ENCODE measurements at regions of chr2 and their contacts with region 1.

Region 1: DNA sequence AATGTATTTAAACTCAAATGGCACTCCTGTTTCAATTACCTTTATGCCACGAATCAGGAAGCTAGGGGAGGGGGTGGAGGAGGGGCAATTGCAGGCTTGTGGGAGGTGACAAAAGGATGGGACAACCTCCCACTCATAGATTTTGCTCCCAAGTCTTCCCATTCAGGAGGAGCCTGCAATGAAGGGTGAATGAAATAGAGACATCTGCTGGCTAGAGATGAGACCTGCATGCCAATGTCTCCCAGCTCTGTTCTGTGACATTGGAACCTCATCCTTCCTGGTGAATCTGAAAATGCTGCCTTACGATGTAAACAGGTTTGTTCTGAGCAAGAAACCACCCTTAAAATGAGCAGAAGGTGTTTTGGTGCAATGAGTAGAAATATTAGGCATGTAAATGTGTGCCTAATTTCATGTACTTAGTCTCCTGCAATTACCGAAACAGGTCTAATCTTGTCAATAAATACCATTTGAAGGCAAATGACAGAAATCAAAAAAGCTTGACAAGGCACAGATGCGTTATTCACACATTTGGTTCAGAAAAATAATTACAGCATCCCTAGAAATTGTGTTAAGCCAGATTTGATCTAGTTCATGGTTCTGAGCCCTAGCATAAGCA is 2.7 kb upstream of the PID1 start:
- DNase-seq: peak; percentile 65 to 73
- H3K4me3 ChIP-seq: peak overlapping the region in 1 of 4 experiments; percentile 44; a peak in 1 of 8 replicates
- H3K27ac ChIP-seq: no peak overlapping the region
- H3K4me1 ChIP-seq: peaks cover 3 to 9% (median 5%) of the 10 kb centered on the region in 4 experiments; a peak in 6 of 7 replicates
- H3K27me3 ChIP-seq: peaks cover 0 to 20% (median 17%) of the 10 kb centered on the region in 4 experiments; a peak in 6 of 7 replicates
- CTCF ChIP-seq: peak; percentile 14 to 94 (median 70)
- EP300 ChIP-seq: no peak
- POLR2A ChIP-seq: no peak
- RAD21 ChIP-seq: peak; percentile 85 to 87

Region 2: DNA sequence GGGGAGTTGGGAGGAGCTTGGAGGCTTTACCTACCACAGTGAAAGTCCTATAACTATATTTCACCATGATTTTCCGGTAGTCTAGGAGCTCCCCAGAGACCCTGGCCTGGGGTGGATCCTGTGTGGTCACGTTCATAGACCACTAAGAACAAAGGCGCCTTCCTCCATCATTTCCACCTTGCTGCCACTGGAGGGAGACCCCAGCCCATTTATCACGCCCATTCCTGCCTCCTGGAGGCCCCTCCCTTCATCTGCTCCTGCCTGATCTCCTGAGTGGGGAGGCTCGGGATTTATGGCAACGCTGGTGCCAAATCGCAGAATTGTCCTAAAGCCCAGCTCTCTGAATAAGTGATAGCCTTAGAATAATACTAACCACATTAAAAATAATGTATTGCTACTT is 584.8 kb before region 1 on chr2:
- CTCF ChIA-PET with region 1: interaction called, 32 read pairs
- POLR2A ChIA-PET with region 1: no interaction called
- DNase-seq: peak; percentile 38 to 68
- H3K4me3 ChIP-seq: no peak overlapping the region
- H3K27ac ChIP-seq: no peak overlapping the region
- H3K4me1 ChIP-seq: no peaks in the 10 kb centered on the region
- H3K27me3 ChIP-seq: no peaks in the 10 kb centered on the region
- CTCF ChIP-seq: peak; percentile 83 to 87 (median 85)
- EP300 ChIP-seq: no peak
- POLR2A ChIP-seq: no peak
- RAD21 ChIP-seq: peak; percentile 96 to 97

Region 3: GRCh38 chr2:228747483-228747882 is 526.3 kb before region 1 on chr2:
- CTCF ChIA-PET with region 1: interaction called, 13 read pairs
- POLR2A ChIA-PET with region 1: no interaction called
- DNase-seq: no peak
- H3K4me3 ChIP-seq: no peak overlapping the region
- H3K27ac ChIP-seq: no peak overlapping the region
- H3K4me1 ChIP-seq: no peaks in the 10 kb centered on the region
- H3K27me3 ChIP-seq: no peaks in the 10 kb centered on the region
- CTCF ChIP-seq: no peak
- EP300 ChIP-seq: no peak
- POLR2A ChIP-seq: no peak
- RAD21 ChIP-seq: no peak

Region 4: GRCh38 chr2:229126066-229126465 is 147.8 kb before region 1 on chr2:
- CTCF ChIA-PET with region 1: interaction called, 59 read pairs
- POLR2A ChIA-PET with region 1: no interaction called
- DNase-seq: no peak
- H3K4me3 ChIP-seq: no peak overlapping the region
- H3K27ac ChIP-seq: no peak overlapping the region
- H3K4me1 ChIP-seq: no peaks in the 10 kb centered on the region
- H3K27me3 ChIP-seq: no peaks in the 10 kb centered on the region
- CTCF ChIP-seq: no peak
- EP300 ChIP-seq: no peak
- POLR2A ChIP-seq: no peak
- RAD21 ChIP-seq: no peak

Region 5: GRCh38 chr2:229133155-229133772 is 140.6 kb before region 1 on chr2:
- CTCF ChIA-PET with region 1: interaction called, 59 read pairs
- POLR2A ChIA-PET with region 1: no interaction called
- DNase-seq: no peak
- H3K4me3 ChIP-seq: no peak overlapping the region
- H3K27ac ChIP-seq: no peak overlapping the region
- H3K4me1 ChIP-seq: no peaks in the 10 kb centered on the region
- H3K27me3 ChIP-seq: no peaks in the 10 kb centered on the region
- CTCF ChIP-seq: peak in 2 of 3 experiments; percentile 50 to 58; a peak in 2 of 4 replicates
- EP300 ChIP-seq: no peak
- POLR2A ChIP-seq: no peak
- RAD21 ChIP-seq: peak; percentile 85 to 86

Region 6: GRCh38 chr2:229252996-229253395 is 20.8 kb before region 1 on chr2:
- CTCF ChIA-PET with region 1: interaction called, 12 read pairs
- POLR2A ChIA-PET with region 1: no interaction called
- DNase-seq: no peak
- H3K4me3 ChIP-seq: no peak overlapping the region
- H3K27ac ChIP-seq: no peak overlapping the region
- H3K4me1 ChIP-seq: peaks cover 0 to 3% (median 1%) of the 10 kb centered on the region in 4 experiments; a peak in 4 of 7 replicates
- H3K27me3 ChIP-seq: no peaks in the 10 kb centered on the region
- CTCF ChIP-seq: no peak
- EP300 ChIP-seq: no peak
- POLR2A ChIP-seq: no peak
- RAD21 ChIP-seq: no peak